CD8-positive, alpha-beta memory T cell (primary cell): ENCODE measurements at regions of chr4 and their contacts with region 1.

Region 1: GRCh38 chr4:70704331-70705145 is 16.2 kb downstream of the UTP3 start:
- DNase-seq: peak; percentile 56 to 77 (median 62)
- H3K4me3 ChIP-seq: peak overlapping the region; percentile 40
- H3K4me3 Mint-ChIP-seq: peak overlapping the region; percentile 87 to 99 (median 93)
- H3K27ac ChIP-seq: peak overlapping the region; percentile 39
- H3K27ac Mint-ChIP-seq: peak overlapping the region; percentile 88 to 97 (median 93)
- H3K4me1 ChIP-seq: peaks cover 27% of the 10 kb centered on the region
- H3K4me1 Mint-ChIP-seq: peaks cover 19 to 38% (median 32%) of the 10 kb centered on the region in 3 donors
- H3K27me3 ChIP-seq: no peaks in the 10 kb centered on the region
- H3K27me3 Mint-ChIP-seq: peaks cover 0 to 1% of the 10 kb centered on the region in 2 donors

Region 2: GRCh38 chr4:70515367-70516245 is 188.9 kb before region 1 on chr4:
- CTCF ChIA-PET with region 1: no interaction called
- POLR2A ChIA-PET with region 1: no interaction called
- DNase-seq: no peak
- H3K4me3 ChIP-seq: no peak overlapping the region
- H3K4me3 Mint-ChIP-seq: no peak overlapping the region
- H3K27ac ChIP-seq: no peak overlapping the region
- H3K27ac Mint-ChIP-seq: no peak overlapping the region
- H3K4me1 ChIP-seq: no peaks in the 10 kb centered on the region
- H3K4me1 Mint-ChIP-seq: no peaks in the 10 kb centered on the region
- H3K27me3 ChIP-seq: no peaks in the 10 kb centered on the region
- H3K27me3 Mint-ChIP-seq: peaks cover 4 to 17% of the 10 kb centered on the region in 2 donors

Region 3: DNA sequence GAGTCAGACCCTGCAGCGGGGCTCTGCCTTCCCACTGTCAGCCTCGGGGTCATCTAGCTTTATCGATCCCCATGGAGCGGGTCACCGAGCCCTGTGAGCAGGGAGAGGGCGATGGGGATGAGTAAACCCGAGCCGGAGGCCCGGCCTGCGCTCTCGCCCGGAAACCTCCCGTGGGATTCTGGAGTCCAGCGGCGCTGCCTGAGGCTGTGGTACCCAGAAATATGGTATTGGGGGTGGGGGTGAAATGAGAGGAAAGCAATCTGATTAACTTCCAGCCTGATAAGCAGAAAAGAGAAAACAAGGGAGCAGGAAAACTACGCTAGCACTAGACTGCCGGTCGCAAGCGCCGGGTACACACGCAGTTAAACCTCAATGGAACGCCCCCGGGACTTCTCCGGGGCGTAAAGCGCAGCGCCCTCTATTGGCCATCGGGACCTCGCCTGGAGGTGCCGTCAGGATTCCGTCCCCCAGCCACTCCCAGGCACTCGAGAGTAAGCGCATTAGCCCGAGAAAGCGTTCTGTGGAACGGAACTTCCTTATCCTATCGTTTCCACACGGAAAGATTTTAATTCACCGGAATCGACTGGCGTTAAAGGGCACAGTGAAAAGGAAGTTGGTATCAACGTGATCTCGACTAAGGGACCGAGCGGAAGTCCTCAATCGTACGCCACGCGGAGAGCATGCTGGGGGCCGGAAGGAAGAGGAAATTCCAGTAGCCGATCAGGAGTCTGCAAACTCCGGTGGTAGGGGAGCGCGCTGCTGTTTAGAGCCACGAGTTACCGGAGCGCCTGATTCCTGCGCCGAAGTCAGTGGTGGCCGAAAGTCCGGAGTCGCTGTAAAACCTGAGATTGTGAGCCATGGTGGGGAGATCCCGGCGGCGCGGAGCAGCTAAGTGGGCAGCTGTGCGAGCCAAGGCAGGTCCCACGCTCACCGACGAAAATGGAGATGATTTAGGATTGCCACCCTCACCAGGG is 16.4 kb before region 1 on chr4 and contains the start of gene UTP3:
- CTCF ChIA-PET with region 1: interaction called, 72 read pairs
- POLR2A ChIA-PET with region 1: interaction called, 60 read pairs
- DNase-seq: peak; percentile 86 to 94 (median 92)
- H3K4me3 ChIP-seq: peak within 1 kb of the TSS; percentile 92
- H3K4me3 Mint-ChIP-seq: peak within 1 kb of the TSS; percentile 91 to 100 (median 96)
- H3K27ac ChIP-seq: peak within 1 kb of the TSS; percentile 86
- H3K27ac Mint-ChIP-seq: peak within 1 kb of the TSS; percentile 89 to 100 (median 98)
- H3K4me1 ChIP-seq: peaks cover 17% of the 10 kb centered on the region
- H3K4me1 Mint-ChIP-seq: peaks cover 37 to 57% (median 43%) of the 10 kb centered on the region in 3 donors
- H3K27me3 ChIP-seq: no peaks in the 10 kb centered on the region
- H3K27me3 Mint-ChIP-seq: no peaks in the 10 kb centered on the region
- total RNA-seq, gene UTP3: 42.5 to 43.4 TPM